Naive thymus-derived CD4-positive, alpha-beta T cell (primary cell): ENCODE measurements at regions of chr12 and their contacts with region 1.

Region 1: GRCh38 chr12:106302401-106303201 is at the start of gene TCP11L2:
- DNase-seq: peak; percentile 91 to 96 (median 94)
- ATAC-seq: peak; percentile 79
- H3K4me3 ChIP-seq: peak within 1 kb of the TSS; percentile 94
- H3K4me3 Mint-ChIP-seq: peak within 1 kb of the TSS; percentile 88 to 99 (median 96)
- H3K27ac ChIP-seq: peak within 1 kb of the TSS; percentile 100
- H3K27ac Mint-ChIP-seq: peak within 1 kb of the TSS; percentile 97 to 100 (median 100)
- H3K4me1 ChIP-seq: peaks cover 15 to 49% of the 10 kb centered on the region in 2 donors
- H3K4me1 Mint-ChIP-seq: peaks cover 45 to 75% (median 55%) of the 10 kb centered on the region in 7 donors
- H3K27me3 ChIP-seq: no peaks in the 10 kb centered on the region
- H3K27me3 Mint-ChIP-seq: peaks cover 0 to 2% (median 0%) of the 10 kb centered on the region in 5 donors
- total RNA-seq, gene TCP11L2: 26.9 to 258 (median 134) TPM

Region 2: GRCh38 chr12:104763168-104763805 is 1539.3 kb before region 1 on chr12:
- CTCF ChIA-PET with region 1: no interaction called
- POLR2A ChIA-PET with region 1: no interaction called
- intact Hi-C with region 1: loop called in 1 of 2 experiments (anchors 10 kb)
- DNase-seq: no peak
- ATAC-seq: peak; percentile 69
- H3K4me3 ChIP-seq: no peak overlapping the region
- H3K4me3 Mint-ChIP-seq: peak overlapping the region in 2 of 10 donors; percentile 3 to 64
- H3K27ac ChIP-seq: no peak overlapping the region
- H3K27ac Mint-ChIP-seq: peak overlapping the region in 2 of 9 donors; percentile 13 to 61
- H3K4me1 ChIP-seq: peaks cover 0 to 11% of the 10 kb centered on the region in 2 donors
- H3K4me1 Mint-ChIP-seq: peaks cover 17 to 46% (median 22%) of the 10 kb centered on the region in 7 donors
- H3K27me3 ChIP-seq: no peaks in the 10 kb centered on the region
- H3K27me3 Mint-ChIP-seq: no peaks in the 10 kb centered on the region

Region 3: GRCh38 chr12:104784592-104784991 is 1518.0 kb before region 1 on chr12:
- CTCF ChIA-PET with region 1: no interaction called
- POLR2A ChIA-PET with region 1: no interaction called
- intact Hi-C with region 1: no loop called
- DNase-seq: no peak
- ATAC-seq: no peak
- H3K4me3 ChIP-seq: no peak overlapping the region
- H3K4me3 Mint-ChIP-seq: no peak overlapping the region
- H3K27ac ChIP-seq: no peak overlapping the region
- H3K27ac Mint-ChIP-seq: no peak overlapping the region
- H3K4me1 ChIP-seq: no peaks in the 10 kb centered on the region
- H3K4me1 Mint-ChIP-seq: peaks cover 0 to 6% (median 0%) of the 10 kb centered on the region in 7 donors
- H3K27me3 ChIP-seq: peaks cover 0 to 4% of the 10 kb centered on the region in 2 donors
- H3K27me3 Mint-ChIP-seq: peaks cover 0 to 9% (median 0%) of the 10 kb centered on the region in 5 donors

Region 4: DNA sequence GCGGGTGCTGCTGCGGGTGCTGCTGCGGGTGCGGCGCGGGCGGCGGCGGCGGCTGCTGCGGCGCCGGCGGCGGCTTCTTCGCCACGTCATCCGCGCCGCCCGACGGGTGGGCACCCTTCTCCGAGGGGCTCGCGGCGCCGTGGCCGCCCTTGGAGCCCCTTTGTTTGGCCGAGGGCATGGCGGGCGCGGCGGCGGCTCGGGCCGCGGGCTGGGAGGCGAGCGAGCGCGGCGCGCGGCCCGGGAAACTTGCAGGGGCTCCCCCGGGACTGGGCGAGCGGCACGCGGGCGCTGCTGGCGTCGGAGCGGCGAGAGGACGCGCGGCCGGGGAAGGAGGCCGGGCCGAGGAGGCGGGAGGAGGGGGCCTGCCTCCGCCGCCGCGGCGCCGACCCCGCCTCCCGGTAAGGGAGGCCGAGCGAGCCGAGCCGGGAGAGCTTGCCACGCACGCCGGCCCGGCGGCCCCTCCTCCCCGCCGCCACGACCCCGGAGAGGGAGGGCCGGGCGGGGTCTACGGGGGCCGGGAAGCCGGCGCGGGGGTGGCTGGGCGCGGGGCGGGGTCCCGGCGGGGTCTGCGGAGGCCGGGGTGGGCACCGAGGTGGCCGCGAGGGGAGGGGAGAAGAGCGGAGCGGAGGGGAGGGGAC is 54.8 kb before region 1 on chr12 and contains the start of gene CKAP4:
- CTCF ChIA-PET with region 1: interaction called, 4 read pairs
- POLR2A ChIA-PET with region 1: interaction called, 188 read pairs
- intact Hi-C with region 1: loop called (anchors 1 kb)
- DNase-seq: peak; percentile 45 to 65 (median 55)
- ATAC-seq: peak; percentile 59
- H3K4me3 ChIP-seq: peak within 1 kb of the TSS; percentile 69
- H3K4me3 Mint-ChIP-seq: peak within 1 kb of the TSS; percentile 81 to 92 (median 86)
- H3K27ac ChIP-seq: peak within 1 kb of the TSS; percentile 80
- H3K27ac Mint-ChIP-seq: peak within 1 kb of the TSS; percentile 58 to 98 (median 94)
- H3K4me1 ChIP-seq: peaks cover 17 to 22% of the 10 kb centered on the region in 2 donors
- H3K4me1 Mint-ChIP-seq: peaks cover 13 to 37% (median 31%) of the 10 kb centered on the region in 7 donors
- H3K27me3 ChIP-seq: no peaks in the 10 kb centered on the region
- H3K27me3 Mint-ChIP-seq: peaks cover 0 to 19% (median 0%) of the 10 kb centered on the region in 5 donors
- total RNA-seq, gene CKAP4: 4.3 to 27.2 (median 13.0) TPM

Region 5: DNA sequence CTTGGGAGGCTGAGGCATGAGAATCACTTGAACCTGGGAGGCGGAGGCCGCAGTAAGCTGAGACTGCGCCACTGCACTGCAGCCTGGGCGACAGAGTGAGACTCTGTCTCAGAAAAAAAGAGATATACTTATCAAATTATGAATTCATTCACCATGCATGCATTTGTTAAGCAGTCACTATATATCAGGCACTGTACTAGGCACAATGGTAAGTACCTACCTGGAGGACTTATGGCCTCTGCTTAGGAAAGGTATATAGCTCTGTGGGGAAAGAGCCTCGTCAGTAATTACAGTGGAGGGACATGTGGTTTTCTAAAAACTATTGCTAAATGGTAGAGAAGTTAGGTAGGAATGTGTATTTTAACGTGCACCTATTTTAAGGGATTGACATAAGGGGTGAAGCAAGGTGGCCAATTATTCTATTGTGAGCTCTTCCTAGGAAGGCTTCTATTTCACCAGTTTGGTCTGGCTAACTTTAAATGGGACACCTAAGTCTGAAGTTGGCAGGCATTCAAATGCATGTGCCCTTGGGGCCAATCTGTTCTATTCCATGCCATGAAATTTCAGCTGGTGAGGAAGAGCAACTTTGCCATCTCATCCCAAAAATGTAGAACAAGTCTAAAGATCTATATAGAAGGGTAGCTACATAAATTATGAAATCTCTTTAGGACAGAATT is 14.9 kb after region 1 on chr12:
- CTCF ChIA-PET with region 1: interaction called, 3 read pairs
- POLR2A ChIA-PET with region 1: interaction called, 74 read pairs
- intact Hi-C with region 1: loop called in 1 of 2 experiments (anchors 1 kb)
- DNase-seq: no peak
- ATAC-seq: no peak
- H3K4me3 ChIP-seq: no peak overlapping the region
- H3K4me3 Mint-ChIP-seq: no peak overlapping the region
- H3K27ac ChIP-seq: no peak overlapping the region
- H3K27ac Mint-ChIP-seq: peak overlapping the region in 1 of 9 donors; percentile 69
- H3K4me1 ChIP-seq: no peaks in the 10 kb centered on the region
- H3K4me1 Mint-ChIP-seq: peaks cover 0 to 32% (median 23%) of the 10 kb centered on the region in 7 donors
- H3K27me3 ChIP-seq: no peaks in the 10 kb centered on the region
- H3K27me3 Mint-ChIP-seq: no peaks in the 10 kb centered on the region

Region 6: GRCh38 chr12:106774005-106774807 is 471.6 kb after region 1 on chr12 and contains the start of gene RIC8B:
- CTCF ChIA-PET with region 1: no interaction called
- POLR2A ChIA-PET with region 1: interaction called, 4 read pairs
- intact Hi-C with region 1: loop called (anchors 2 kb)
- DNase-seq: peak; percentile 63 to 84 (median 70)
- ATAC-seq: peak; percentile 91
- H3K4me3 ChIP-seq: peak within 1 kb of the TSS; percentile 84
- H3K4me3 Mint-ChIP-seq: peak within 1 kb of the TSS; percentile 92 to 100 (median 97)
- H3K27ac ChIP-seq: peak within 1 kb of the TSS; percentile 88
- H3K27ac Mint-ChIP-seq: peak within 1 kb of the TSS; percentile 94 to 99 (median 97)
- H3K4me1 ChIP-seq: peaks cover 0 to 19% of the 10 kb centered on the region in 2 donors
- H3K4me1 Mint-ChIP-seq: peaks cover 22 to 49% (median 39%) of the 10 kb centered on the region in 7 donors
- H3K27me3 ChIP-seq: no peaks in the 10 kb centered on the region
- H3K27me3 Mint-ChIP-seq: peaks cover 0 to 7% (median 0%) of the 10 kb centered on the region in 5 donors
- total RNA-seq, gene RIC8B: 9.8 to 21.1 (median 15.6) TPM

Region 7: GRCh38 chr12:107221913-107222312 is 919.3 kb after region 1 on chr12:
- CTCF ChIA-PET with region 1: no interaction called
- POLR2A ChIA-PET with region 1: no interaction called
- intact Hi-C with region 1: no loop called
- DNase-seq: no peak
- ATAC-seq: no peak
- H3K4me3 ChIP-seq: no peak overlapping the region
- H3K4me3 Mint-ChIP-seq: no peak overlapping the region
- H3K27ac ChIP-seq: no peak overlapping the region
- H3K27ac Mint-ChIP-seq: no peak overlapping the region
- H3K4me1 ChIP-seq: no peaks in the 10 kb centered on the region
- H3K4me1 Mint-ChIP-seq: peaks cover 0 to 4% (median 0%) of the 10 kb centered on the region in 7 donors
- H3K27me3 ChIP-seq: no peaks in the 10 kb centered on the region
- H3K27me3 Mint-ChIP-seq: peaks cover 3 to 27% (median 10%) of the 10 kb centered on the region in 5 donors

Region 8: DNA sequence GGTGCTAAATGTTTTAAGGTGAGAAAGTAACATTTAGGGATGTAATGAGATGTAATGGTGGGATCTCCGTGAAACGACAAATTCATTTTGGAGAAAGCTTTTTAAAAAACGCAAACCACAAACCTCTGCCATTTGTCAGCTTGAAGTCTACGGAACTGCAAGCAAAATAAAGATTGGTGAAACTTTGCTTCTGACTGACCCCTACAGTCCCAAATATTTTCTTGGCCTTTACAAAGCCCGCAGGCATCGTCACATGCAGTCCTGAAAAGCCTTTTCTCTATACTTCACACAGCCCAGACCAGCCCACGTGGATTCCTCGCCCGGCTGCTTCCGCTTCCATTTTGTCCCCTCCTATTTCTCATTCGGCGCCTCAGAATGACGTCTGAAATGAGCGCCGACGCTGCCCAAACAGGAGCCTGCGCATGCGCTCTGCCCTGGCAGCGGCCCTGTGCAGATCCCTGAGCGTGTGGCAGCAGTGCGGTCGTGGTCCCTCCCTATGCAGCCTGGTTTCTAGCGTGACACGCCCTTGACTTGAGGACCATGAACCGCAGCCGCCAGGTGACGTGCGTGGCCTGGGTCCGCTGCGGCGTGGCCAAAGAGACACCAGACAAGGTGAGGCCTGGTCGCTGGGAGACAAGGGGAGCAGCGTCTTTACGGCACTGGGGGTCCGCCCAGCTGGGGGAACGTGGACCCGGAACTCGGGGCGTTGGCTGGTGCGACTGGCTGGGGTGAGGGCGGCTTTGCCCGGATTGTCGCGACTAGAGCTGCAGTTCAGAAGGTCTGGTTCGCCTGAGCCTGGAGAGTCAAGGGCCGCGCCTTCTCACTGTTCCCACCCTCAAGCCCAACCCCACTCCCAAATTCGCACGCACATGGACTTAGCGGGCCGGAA is 1383.0 kb after region 1 on chr12 and contains the start of gene PWP1:
- CTCF ChIA-PET with region 1: no interaction called
- POLR2A ChIA-PET with region 1: no interaction called
- intact Hi-C with region 1: loop called in 1 of 2 experiments (anchors 2 kb)
- DNase-seq: peak; percentile 93 to 97 (median 95)
- ATAC-seq: peak; percentile 93
- H3K4me3 ChIP-seq: peak within 1 kb of the TSS; percentile 78
- H3K4me3 Mint-ChIP-seq: peak within 1 kb of the TSS; percentile 90 to 99 (median 95)
- H3K27ac ChIP-seq: peak within 1 kb of the TSS; percentile 88
- H3K27ac Mint-ChIP-seq: peak within 1 kb of the TSS; percentile 90 to 99 (median 97)
- H3K4me1 ChIP-seq: peaks cover 12 to 19% of the 10 kb centered on the region in 2 donors
- H3K4me1 Mint-ChIP-seq: peaks cover 23 to 40% (median 35%) of the 10 kb centered on the region in 7 donors
- H3K27me3 ChIP-seq: no peaks in the 10 kb centered on the region
- H3K27me3 Mint-ChIP-seq: peaks cover 0 to 3% (median 0%) of the 10 kb centered on the region in 5 donors
- total RNA-seq, gene PWP1: 20.9 to 42.5 (median 25.7) TPM